ENCODE measurements at regions of chr19 and their contacts with region 1.

Region 1: GRCh38 chr19:35757749-35758608 is at the start of gene PROSER3:
- DNase-seq: peak; percentile 98 to 99 (median 99)
- ATAC-seq: peak; percentile 75 to 89 (median 82)
- H3K4me3 ChIP-seq: peak within 1 kb of the TSS; percentile 68 to 99 (median 86)
- H3K27ac ChIP-seq: peak within 1 kb of the TSS; percentile 88 to 100 (median 96)
- H3K4me1 ChIP-seq: peaks cover 0 to 51% (median 37%) of the 10 kb centered on the region in 12 donors
- H3K27me3 ChIP-seq: no peaks in the 10 kb centered on the region
- CTCF ChIP-seq: no peak
- POLR2A ChIP-seq: peak in 1 of 2 donors; percentile 63
- total RNA-seq, gene PROSER3: 1.9 to 19.7 (median 9.7) TPM

Region 2: GRCh38 chr19:35740423-35741202 is 17.4 kb before region 1 on chr19:
- intact Hi-C with region 1: loop called in 1 of 10 experiments (anchors 1 kb)
- DNase-seq: peak; percentile 97 to 99 (median 99)
- ATAC-seq: peak; percentile 83 to 89 (median 86)
- H3K4me3 ChIP-seq: peak overlapping the region; percentile 20 to 80 (median 64)
- H3K27ac ChIP-seq: peak overlapping the region in 11 of 12 donors; percentile 60 to 95 (median 74)
- H3K4me1 ChIP-seq: peaks cover 7 to 52% (median 23%) of the 10 kb centered on the region in 12 donors
- H3K27me3 ChIP-seq: no peaks in the 10 kb centered on the region
- CTCF ChIP-seq: peak in 3 of 12 donors; percentile 10 to 31 (median 24)
- POLR2A ChIP-seq: peak in 1 of 2 donors; percentile 33

Region 3: DNA sequence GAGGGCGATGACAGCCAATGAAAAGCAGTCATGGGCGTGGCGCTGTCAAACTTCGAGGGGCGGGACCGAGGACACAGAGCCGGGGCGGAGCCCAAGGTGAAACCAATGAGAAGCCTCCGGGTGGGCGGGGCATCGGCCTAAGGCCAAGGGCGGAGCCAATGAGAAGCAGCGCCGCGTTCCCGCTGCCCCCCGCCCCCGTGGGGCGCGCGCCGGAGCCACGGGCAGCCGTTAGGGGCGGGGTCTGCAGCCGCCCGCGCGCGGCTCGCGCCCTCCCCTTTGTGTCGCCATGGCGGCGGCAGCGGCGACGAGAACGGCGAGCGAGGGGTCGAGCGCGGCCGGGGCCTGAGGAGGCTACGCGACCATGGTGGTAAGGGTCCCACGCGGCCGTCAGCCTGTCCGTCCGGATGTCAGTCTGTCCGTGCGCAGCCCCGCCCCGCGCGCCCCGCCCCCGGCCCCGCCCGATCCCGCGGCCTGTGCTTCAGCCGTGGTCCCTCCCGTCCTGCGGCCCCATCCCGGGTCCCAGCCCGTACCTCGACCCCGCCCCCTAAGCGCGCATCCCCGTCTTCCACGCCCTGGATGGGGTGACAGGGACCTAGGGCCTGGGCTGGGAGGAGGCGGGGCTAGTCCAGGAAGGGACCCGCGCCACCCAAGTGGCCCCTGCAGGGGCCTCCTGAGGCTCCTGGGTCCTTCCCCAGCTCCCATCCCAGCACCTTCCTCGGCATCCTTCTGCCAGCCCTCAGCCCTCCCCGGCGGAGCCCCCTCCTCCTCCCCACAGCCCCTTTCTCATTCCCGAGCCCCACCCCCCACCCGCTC is 17.5 kb after region 1 on chr19 and contains the start of gene ARHGAP33:
- intact Hi-C with region 1: loop called in 1 of 10 experiments (anchors 1 kb)
- DNase-seq: peak; percentile 99 to 100 (median 99)
- ATAC-seq: peak; percentile 98 to 99 (median 98)
- H3K4me3 ChIP-seq: peak within 1 kb of the TSS; percentile 68 to 99 (median 92)
- H3K27ac ChIP-seq: peak within 1 kb of the TSS in 6 of 12 donors; percentile 1 to 77 (median 44)
- H3K4me1 ChIP-seq: peaks cover 0 to 17% (median 5%) of the 10 kb centered on the region in 12 donors
- H3K27me3 ChIP-seq: no peaks in the 10 kb centered on the region
- CTCF ChIP-seq: no peak
- POLR2A ChIP-seq: peak in 1 of 2 donors; percentile 27
- total RNA-seq, gene ARHGAP33: 0.50 to 7.8 (median 5.7) TPM

Region 4: DNA sequence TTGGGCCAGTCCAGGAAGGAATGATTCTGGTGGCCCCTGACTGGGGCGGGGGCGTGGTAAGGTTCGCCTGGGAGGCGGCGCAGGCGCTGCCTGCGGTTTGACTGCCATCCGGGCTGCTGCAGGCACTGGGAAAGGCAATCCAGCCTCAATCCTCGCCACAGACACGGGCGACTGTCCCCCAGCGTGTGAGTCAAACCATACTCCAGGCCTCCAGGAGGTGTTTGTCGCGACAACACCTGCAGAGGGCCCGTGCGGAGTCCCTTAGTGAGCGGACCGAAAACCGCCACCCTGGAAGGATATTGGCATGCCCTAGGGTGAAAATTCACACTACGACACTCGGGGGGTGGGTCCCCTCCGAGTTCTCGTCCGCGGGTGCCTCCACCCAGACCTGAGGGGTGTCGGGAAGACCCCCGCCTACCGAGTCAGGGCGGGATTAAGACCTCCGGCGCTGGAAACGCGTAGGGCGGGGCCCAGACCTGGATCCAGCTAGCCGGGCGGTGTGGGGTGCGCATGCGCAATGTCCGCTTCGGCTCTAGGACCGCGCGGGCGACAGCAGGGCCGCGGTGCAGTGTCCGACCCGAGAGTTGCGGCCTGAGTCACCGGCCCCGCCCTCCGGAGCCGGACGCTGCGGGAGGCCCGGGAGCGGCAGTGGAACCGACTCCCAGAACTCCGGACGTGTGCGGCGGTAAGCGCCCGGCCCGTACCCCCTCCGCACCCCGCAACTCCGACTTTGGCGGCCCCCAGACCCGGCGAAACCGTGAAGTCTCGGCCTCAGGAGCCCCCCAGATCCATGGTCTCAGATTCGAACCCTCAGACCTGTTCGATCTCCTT is 381.7 kb after region 1 on chr19 and contains the start of gene CAPNS1:
- intact Hi-C with region 1: loop called in 1 of 10 experiments (anchors 10 kb)
- DNase-seq: peak; percentile 98 to 99 (median 99)
- ATAC-seq: peak; percentile 91 to 93 (median 92)
- H3K4me3 ChIP-seq: peak within 1 kb of the TSS; percentile 80 to 100 (median 95)
- H3K27ac ChIP-seq: peak within 1 kb of the TSS; percentile 93 to 100 (median 99)
- H3K4me1 ChIP-seq: peaks cover 0 to 30% (median 16%) of the 10 kb centered on the region in 12 donors
- H3K27me3 ChIP-seq: no peaks in the 10 kb centered on the region
- CTCF ChIP-seq: peak in 5 of 12 donors; percentile 14 to 19 (median 17)
- POLR2A ChIP-seq: peak; percentile 95 to 97
- total RNA-seq, gene CAPNS1: 272 to 1,054 (median 860) TPM

Region 5: DNA sequence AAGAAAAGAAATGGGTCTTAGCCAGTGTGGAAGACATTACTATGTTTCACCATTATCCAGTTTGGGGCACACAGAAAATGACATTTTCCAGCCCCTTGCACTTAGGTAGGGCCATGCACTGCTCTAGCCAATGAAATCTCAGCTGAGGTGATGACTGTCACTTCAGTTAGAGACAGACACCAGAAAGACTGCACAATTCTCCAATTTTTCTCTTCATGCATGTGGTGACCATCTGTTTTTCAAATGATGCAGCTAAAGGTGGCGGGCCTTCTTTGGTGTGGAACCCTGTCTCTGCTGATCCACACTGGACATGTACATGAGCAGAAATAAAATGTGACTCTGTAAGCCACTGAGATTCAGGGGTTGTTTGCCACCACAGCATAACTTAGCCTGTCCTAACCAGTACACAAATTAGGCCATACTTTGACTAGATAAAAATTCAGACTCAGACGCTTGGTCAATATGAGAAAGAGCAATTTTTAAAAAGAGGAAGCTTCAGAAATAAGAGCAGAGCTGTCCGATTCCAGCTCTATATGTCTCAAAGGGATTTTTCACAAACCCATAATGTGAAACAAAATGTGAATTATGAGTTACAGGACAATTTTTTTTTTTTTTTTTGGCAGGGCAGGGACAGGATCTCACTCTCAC is 449.8 kb after region 1 on chr19:
- intact Hi-C with region 1: no loop called
- DNase-seq: no peak
- ATAC-seq: no peak
- H3K4me3 ChIP-seq: no peak overlapping the region
- H3K27ac ChIP-seq: no peak overlapping the region
- H3K4me1 ChIP-seq: no peaks in the 10 kb centered on the region
- H3K27me3 ChIP-seq: no peaks in the 10 kb centered on the region
- CTCF ChIP-seq: no peak
- POLR2A ChIP-seq: no peak